CD14-positive monocyte (primary cell): ENCODE measurements at regions of chr3 and their contacts with region 1.

Region 1: GRCh38 chr3:136255672-136256406 is 5.7 kb downstream of the PCCB start:
- DNase-seq: no peak
- H3K4me3 ChIP-seq: no peak overlapping the region
- H3K4me3 Mint-ChIP-seq: no peak overlapping the region
- H3K27ac ChIP-seq: no peak overlapping the region
- H3K27ac Mint-ChIP-seq: peak overlapping the region in 1 of 7 donors; percentile 37
- H3K4me1 ChIP-seq: peaks cover 6 to 7% of the 10 kb centered on the region in 2 donors
- H3K4me1 Mint-ChIP-seq: peaks cover 12% of the 10 kb centered on the region
- H3K27me3 ChIP-seq: no peaks in the 10 kb centered on the region
- H3K27me3 Mint-ChIP-seq: peaks cover 0 to 2% (median 2%) of the 10 kb centered on the region in 3 donors
- CTCF ChIP-seq: no peak

Region 2: DNA sequence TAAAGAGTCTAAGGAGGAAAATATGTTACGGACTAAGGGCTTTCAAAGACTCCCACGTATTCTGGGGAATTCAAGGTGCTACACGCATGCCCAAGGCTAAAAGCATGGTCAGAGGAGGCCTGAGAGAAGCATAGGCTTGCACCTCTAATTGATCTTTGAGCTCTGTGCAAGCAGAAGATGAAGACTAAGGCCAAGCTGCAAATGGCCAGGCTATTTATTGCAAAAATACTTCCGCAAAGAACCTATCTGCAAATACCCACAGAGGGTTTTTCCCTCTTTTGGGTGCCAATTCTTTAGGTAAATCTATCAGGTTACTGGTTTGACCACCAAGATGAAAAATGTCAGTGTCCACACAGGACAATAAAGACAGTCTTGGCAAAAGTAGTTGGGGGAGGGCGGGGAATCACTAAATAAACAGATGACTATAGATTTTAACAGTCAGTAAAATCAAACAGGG is 376.8 kb after region 1 on chr3:
- intact Hi-C with region 1: loop called in 1 of 2 experiments (anchors 5 kb)
- DNase-seq: no peak
- H3K4me3 ChIP-seq: no peak overlapping the region
- H3K4me3 Mint-ChIP-seq: no peak overlapping the region
- H3K27ac ChIP-seq: no peak overlapping the region
- H3K27ac Mint-ChIP-seq: no peak overlapping the region
- H3K4me1 ChIP-seq: no peaks in the 10 kb centered on the region
- H3K4me1 Mint-ChIP-seq: peaks cover 3% of the 10 kb centered on the region
- H3K27me3 ChIP-seq: no peaks in the 10 kb centered on the region
- H3K27me3 Mint-ChIP-seq: no peaks in the 10 kb centered on the region
- CTCF ChIP-seq: no peak